Activated CD4-positive, alpha-beta memory T cell treated with anti-CD3 and anti-CD28 coated beads, Interleukin-2, amount 10 ng/mL, durations not matched to agents 7 days and 5 days (primary cell): ENCODE measurements at regions of chr10 and their contacts with region 1.

Region 1: DNA sequence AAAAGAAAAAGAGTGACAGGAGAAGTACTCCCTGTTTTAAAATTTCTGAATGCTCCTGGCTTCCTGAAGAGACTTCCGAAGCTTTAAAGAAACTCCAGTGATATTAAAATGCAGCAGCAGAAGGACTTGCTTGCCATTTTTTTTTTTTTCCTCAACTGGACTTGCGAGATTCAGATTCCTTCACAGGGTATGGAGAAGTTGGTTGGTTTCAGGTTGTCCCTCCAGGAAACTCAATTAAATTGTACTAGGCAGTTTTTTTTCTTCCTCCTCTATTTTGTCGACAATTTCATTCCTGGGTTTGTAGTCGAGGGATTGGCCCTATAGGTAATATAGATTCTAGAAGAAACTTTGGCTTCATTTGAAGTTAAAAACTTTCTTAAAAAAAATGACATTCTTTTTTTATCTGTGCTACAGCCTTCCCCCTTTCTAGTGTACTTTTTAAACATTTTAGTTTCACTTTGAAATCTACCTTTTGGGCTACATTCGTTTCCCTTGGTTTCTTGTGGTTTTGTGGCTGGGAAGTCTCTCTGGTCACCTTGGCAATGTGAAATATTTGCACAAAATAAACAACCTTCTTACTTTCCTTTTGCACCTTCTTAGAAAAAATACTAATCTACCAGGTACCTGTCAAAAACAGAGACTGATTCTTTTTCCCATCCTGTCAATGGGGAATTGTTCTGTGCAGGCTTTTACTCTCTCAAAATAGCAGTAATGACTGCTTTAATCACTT is 350.1 kb downstream of the GATA3 start:
- DNase-seq: peak; percentile 71
- H3K4me3 Mint-ChIP-seq: peak overlapping the region; percentile 57
- H3K27ac Mint-ChIP-seq: peak overlapping the region; percentile 89
- H3K4me1 Mint-ChIP-seq: peaks cover 80% of the 10 kb centered on the region
- H3K27me3 Mint-ChIP-seq: no peaks in the 10 kb centered on the region

Region 2: GRCh38 chr10:8065651-8066050 is 338.9 kb before region 1 on chr10:
- CTCF ChIA-PET with region 1: interaction called, 7 read pairs
- POLR2A ChIA-PET with region 1: interaction called, 58 read pairs
- DNase-seq: no peak
- H3K4me3 Mint-ChIP-seq: peak overlapping the region; percentile 68
- H3K27ac Mint-ChIP-seq: peak overlapping the region; percentile 84
- H3K4me1 Mint-ChIP-seq: peaks cover 96% of the 10 kb centered on the region
- H3K27me3 Mint-ChIP-seq: no peaks in the 10 kb centered on the region

Region 3: GRCh38 chr10:8325024-8325980 is 79.3 kb before region 1 on chr10:
- CTCF ChIA-PET with region 1: interaction called, 3 read pairs
- POLR2A ChIA-PET with region 1: interaction called, 64 read pairs
- DNase-seq: peak; percentile 35
- H3K4me3 Mint-ChIP-seq: peak overlapping the region; percentile 10
- H3K27ac Mint-ChIP-seq: peak overlapping the region; percentile 82
- H3K4me1 Mint-ChIP-seq: peaks cover 70% of the 10 kb centered on the region
- H3K27me3 Mint-ChIP-seq: no peaks in the 10 kb centered on the region

Region 4: DNA sequence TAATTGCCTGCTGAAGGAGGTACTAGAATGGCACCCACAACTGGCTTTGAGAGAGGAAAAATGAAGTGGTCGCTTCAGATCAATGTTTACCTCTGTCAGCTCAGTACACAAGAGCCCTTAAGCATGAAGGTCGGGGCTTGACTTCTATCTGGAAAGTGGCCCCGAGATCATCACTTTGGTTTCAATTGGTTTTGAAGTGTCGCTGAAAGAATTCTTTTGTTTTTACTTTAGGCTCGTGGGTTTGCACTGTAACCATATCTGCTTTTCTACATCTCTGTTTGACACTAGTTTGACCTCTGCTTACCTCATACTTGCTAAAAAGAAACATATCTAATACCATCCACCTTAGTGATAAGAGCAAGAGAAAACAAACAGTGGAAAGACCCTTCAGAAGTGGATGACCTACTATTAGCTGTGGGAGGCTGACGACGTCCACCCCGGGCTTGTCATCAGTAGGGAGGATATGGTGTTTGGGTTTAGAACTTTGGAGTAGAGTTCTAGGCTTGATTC is 11.7 kb after region 1 on chr10:
- CTCF ChIA-PET with region 1: interaction called, 4 read pairs
- POLR2A ChIA-PET with region 1: interaction called, 27 read pairs
- DNase-seq: peak; percentile 41
- H3K4me3 Mint-ChIP-seq: peak overlapping the region; percentile 13
- H3K27ac Mint-ChIP-seq: peak overlapping the region; percentile 73
- H3K4me1 Mint-ChIP-seq: peaks cover 44% of the 10 kb centered on the region
- H3K27me3 Mint-ChIP-seq: no peaks in the 10 kb centered on the region

Region 5: GRCh38 chr10:8543361-8544069 is 139.0 kb after region 1 on chr10:
- CTCF ChIA-PET with region 1: no interaction called
- POLR2A ChIA-PET with region 1: no interaction called
- DNase-seq: no peak
- H3K4me3 Mint-ChIP-seq: no peak overlapping the region
- H3K27ac Mint-ChIP-seq: no peak overlapping the region
- H3K4me1 Mint-ChIP-seq: no peaks in the 10 kb centered on the region
- H3K27me3 Mint-ChIP-seq: no peaks in the 10 kb centered on the region